ENCODE measurements at regions of chr6 and their contacts with region 1.

Region 1: DNA sequence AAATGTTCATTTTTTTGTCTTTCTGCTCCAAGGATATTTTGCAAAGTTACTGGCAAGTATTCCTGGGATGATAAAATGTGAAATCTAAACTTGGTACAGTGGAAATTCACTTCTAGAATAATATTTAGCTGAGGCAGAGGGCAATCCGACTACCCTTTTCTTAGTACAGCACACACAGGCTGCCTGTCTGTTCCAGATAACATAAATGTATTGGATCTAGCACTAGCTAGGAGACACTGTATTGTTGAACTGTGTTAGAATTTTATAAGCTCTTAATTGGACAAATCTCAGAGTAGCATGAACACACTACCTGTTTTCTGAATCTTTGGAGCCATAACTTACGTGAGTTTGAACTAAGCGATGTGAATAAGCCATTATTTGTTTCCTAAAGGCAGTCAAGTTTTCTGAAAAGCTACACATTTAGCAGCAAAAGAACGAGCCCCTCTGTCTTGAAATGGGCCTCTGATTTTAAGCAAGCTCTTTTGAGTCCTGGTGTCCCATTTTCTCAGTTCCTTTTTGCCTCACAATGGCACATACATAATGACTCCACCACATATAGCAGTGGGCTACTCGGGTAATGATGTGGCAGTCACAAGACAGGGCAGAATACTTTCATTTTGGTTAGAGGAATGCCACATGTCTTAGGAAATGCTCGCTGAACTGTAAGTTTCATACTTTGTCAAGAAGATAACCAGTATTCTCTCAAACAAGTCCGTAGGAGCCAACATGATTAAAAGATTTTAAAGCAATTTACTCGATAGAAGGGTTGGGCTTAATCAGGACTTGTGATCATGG is 116.5 kb upstream of the ESR1 start:
- DNase-seq: peak; percentile 79
- H3K4me3 ChIP-seq: peak overlapping the region; percentile 70
- H3K27ac ChIP-seq: peak overlapping the region; percentile 63
- H3K4me1 ChIP-seq: peaks cover 22% of the 10 kb centered on the region
- H3K27me3 ChIP-seq: no peaks in the 10 kb centered on the region

Region 2: DNA sequence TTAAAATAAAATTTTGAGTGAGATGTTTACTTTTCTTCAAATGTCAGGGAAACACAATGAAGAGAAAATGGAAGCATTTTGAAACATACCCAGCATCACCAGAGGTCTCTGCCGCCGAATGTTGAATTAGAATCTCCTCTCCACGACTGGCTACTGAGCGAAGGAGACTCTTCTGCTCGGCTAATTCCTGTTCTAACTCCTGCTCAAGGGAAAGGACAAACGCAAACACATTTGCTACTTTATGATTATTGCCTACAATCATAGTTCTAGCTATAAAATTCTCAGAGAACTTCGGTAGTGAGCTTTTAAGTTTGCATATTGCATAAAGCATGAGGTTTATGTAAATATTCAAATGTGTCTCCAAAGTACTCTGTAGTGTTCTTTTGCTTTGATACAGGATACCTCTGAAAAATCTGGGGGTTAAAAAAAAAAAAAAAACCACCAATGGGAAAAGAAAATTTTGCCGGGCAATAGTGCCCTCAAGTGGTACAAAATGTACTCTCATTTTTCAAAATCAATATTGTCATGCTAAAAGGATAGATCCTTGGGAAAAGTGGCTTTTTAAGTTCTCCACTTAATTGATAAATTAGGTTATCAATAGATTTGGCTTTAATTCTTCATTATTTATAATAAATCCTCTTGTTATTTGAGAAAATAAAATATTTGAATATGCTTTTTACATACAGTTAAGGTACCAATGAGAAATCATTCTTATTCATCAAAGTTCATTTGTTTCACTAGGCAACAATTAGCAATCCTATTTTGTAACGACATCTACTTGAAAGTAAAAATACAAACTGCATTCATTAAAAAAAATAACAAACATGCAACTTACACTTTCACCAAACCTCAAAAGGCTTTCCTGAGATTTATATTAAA is 577.2 kb after region 1 on chr6:
- in situ Hi-C with region 1: loop called (anchors 10 kb)
- DNase-seq: peak; percentile 50
- H3K4me3 ChIP-seq: no peak overlapping the region
- H3K27ac ChIP-seq: no peak overlapping the region
- H3K4me1 ChIP-seq: peaks cover 41% of the 10 kb centered on the region
- H3K27me3 ChIP-seq: no peaks in the 10 kb centered on the region

Region 3: GRCh38 chr6:152975204-152975915 is 1284.4 kb after region 1 on chr6:
- in situ Hi-C with region 1: no loop called
- DNase-seq: no peak
- H3K4me3 ChIP-seq: no peak overlapping the region
- H3K27ac ChIP-seq: no peak overlapping the region
- H3K4me1 ChIP-seq: peaks cover 7% of the 10 kb centered on the region; the same call in 1 of the 2 replicates
- H3K27me3 ChIP-seq: no peaks in the 10 kb centered on the region